ENCODE measurements at regions of chr16 and their contacts with region 1.

Region 1: GRCh38 chr16:27235055-27235937 is 32.0 kb downstream of the KDM8 start:
- DNase-seq: peak; percentile 79 to 94 (median 80)
- ATAC-seq: peak; percentile 88
- H3K4me3 ChIP-seq: no peak overlapping the region
- H3K27ac ChIP-seq: peak overlapping the region; percentile 64
- H3K4me1 ChIP-seq: peaks cover 32 to 48% of the 10 kb centered on the region in 2 experiments
- H3K27me3 ChIP-seq: no peaks in the 10 kb centered on the region
- CTCF ChIP-seq: peak; percentile 81 to 91 (median 88)
- EP300 ChIP-seq: peak; percentile 69
- POLR2A ChIP-seq: peak; percentile 32; the same call in 1 of the 2 replicates
- RAD21 ChIP-seq: peak; percentile 79 to 84

Region 2: GRCh38 chr16:27154705-27155521 is 80.4 kb before region 1 on chr16:
- CTCF ChIA-PET with region 1: no interaction called
- POLR2A ChIA-PET with region 1: no interaction called
- in situ Hi-C with region 1: no loop called
- intact Hi-C with region 1: loop called (anchors 1 kb)
- DNase-seq: peak; percentile 68 to 87 (median 82)
- ATAC-seq: peak; percentile 95
- H3K4me3 ChIP-seq: no peak overlapping the region
- H3K27ac ChIP-seq: no peak overlapping the region
- H3K4me1 ChIP-seq: no peaks in the 10 kb centered on the region
- H3K27me3 ChIP-seq: peaks cover 0 to 15% of the 10 kb centered on the region in 2 experiments; a peak in 2 of 5 replicates
- CTCF ChIP-seq: peak; percentile 86 to 92 (median 87)
- EP300 ChIP-seq: no peak
- POLR2A ChIP-seq: no peak
- RAD21 ChIP-seq: peak; percentile 65 to 84

Region 3: DNA sequence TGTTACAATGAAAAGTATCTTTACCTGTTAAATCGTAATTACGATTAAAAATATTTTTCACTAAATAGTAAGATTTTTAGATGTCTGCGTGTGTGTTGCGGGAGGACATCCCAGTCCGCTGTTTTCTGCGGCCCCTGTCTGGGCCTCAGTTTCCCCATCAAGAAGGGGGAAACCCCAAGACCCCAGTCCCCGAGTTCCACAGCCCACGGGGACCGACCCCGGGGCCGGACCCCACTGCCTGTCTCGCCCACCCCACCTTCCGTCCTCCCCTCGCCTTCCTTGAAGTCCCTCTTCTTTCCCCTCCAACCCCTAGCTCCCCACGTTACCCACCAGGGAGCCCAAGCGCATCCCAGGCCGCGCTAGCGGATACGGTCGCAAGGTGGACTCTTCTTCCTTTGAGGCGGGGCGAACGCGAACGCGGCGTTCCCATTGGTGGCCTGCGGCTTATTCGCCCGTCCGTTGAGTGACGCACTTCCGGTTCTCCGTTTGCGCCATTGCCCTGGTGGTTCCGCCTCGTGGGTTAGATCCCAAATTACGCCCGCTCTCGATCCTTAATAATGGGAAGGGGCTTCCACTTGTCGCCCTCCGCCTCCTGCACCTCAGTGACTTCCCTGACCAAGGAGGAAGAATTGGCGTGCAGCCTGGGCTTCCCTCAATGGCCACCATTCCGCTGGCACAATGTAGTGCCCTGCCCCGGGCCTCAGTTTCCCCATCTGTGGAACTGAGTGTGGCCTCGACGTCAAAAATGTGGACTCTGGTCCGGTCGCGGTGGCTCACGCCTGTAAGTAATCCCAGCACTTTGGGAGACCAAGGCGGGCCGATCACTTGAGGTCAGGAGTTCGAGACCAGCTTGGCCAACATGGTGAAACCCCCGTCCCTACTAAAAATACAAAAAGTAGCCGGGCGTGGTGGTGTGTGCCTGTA is 33.3 kb after region 1 on chr16 and contains the start of gene NSMCE1:
- CTCF ChIA-PET with region 1: no interaction called
- POLR2A ChIA-PET with region 1: interaction called, 4 read pairs
- in situ Hi-C with region 1: no loop called
- intact Hi-C with region 1: loop called (anchors 2 kb)
- DNase-seq: peak; percentile 98 to 99 (median 99)
- ATAC-seq: peak; percentile 100
- H3K4me3 ChIP-seq: peak within 1 kb of the TSS; percentile 72
- H3K27ac ChIP-seq: peak within 1 kb of the TSS; percentile 95
- H3K4me1 ChIP-seq: peaks cover 4 to 7% of the 10 kb centered on the region in 2 experiments; a peak in 3 of 5 replicates
- H3K27me3 ChIP-seq: no peaks in the 10 kb centered on the region
- CTCF ChIP-seq: peak in 2 of 3 experiments; percentile 12 to 18; a peak in 3 of 6 replicates
- EP300 ChIP-seq: no peak
- POLR2A ChIP-seq: peak; percentile 96
- RAD21 ChIP-seq: no peak
- polyA plus RNA-seq, gene NSMCE1: 154 to 163 TPM

Region 4: DNA sequence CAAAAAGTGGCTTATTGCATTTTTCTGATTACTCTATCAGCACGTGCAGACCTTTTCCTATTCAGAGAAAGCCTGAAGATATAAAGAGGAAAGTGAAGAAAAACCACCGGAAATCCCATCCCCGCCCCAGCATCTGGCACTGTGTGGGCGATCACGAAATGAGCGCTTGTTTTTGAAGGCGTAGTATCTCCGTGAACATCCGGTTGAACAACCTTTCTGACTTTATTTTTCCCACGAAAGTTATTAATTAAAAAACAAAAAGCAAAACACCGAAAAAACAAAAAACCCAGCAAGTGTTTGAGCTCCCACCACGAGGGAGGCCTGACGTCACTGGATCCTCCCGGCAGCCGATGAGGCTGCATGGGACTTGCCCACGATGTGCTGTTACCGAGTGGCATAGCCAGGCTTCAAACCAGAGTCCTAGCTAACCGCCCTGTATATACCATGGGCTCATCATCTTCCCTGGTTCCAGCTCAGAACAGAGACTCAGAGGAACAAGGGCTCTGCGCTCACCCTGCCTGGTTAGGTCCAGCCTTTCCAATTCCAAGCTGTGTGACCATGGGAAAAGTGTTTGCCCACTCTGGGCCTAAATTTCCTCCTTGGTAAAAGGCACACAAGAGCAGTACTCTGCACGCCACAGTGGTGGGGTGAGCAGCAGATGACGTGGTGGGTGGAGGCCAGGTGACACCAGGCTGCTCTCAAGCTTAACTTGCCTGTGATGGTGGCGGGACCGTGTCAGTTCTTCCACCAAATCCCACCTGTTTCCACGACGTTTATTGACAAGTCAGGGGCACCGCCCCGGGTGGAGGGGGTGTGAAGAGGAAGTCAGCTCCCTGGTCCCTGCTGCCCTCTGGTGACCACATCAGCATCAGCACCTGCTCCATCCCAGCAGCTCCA is 132.4 kb after region 1 on chr16:
- CTCF ChIA-PET with region 1: interaction called, 19 read pairs
- POLR2A ChIA-PET with region 1: interaction called, 3 read pairs
- in situ Hi-C with region 1: loop called (anchors 5 kb)
- intact Hi-C with region 1: loop called (anchors 1 kb)
- DNase-seq: peak; percentile 83 to 94 (median 92)
- ATAC-seq: peak; percentile 96
- H3K4me3 ChIP-seq: no peak overlapping the region
- H3K27ac ChIP-seq: no peak overlapping the region
- H3K4me1 ChIP-seq: peaks cover 9 to 11% of the 10 kb centered on the region in 2 experiments
- H3K27me3 ChIP-seq: peaks cover 0 to 9% of the 10 kb centered on the region in 2 experiments; a peak in 2 of 5 replicates
- CTCF ChIP-seq: peak; percentile 82 to 91 (median 86)
- EP300 ChIP-seq: no peak
- POLR2A ChIP-seq: no peak
- RAD21 ChIP-seq: peak; percentile 81 to 95

Region 5: GRCh38 chr16:27374804-27375425 is 139.6 kb after region 1 on chr16:
- CTCF ChIA-PET with region 1: interaction called, 3 read pairs
- POLR2A ChIA-PET with region 1: interaction called, 3 read pairs
- in situ Hi-C with region 1: loop called (anchors 5 kb)
- intact Hi-C with region 1: no loop called
- DNase-seq: peak; percentile 70 to 89 (median 84)
- ATAC-seq: peak; percentile 98
- H3K4me3 ChIP-seq: no peak overlapping the region
- H3K27ac ChIP-seq: no peak overlapping the region
- H3K4me1 ChIP-seq: no peaks in the 10 kb centered on the region
- H3K27me3 ChIP-seq: peaks cover 4 to 30% of the 10 kb centered on the region in 2 experiments; a peak in 4 of 5 replicates
- CTCF ChIP-seq: peak; percentile 63 to 73 (median 69)
- EP300 ChIP-seq: no peak
- POLR2A ChIP-seq: no peak
- RAD21 ChIP-seq: peak; percentile 15 to 71; a peak in 2 of 4 replicates

Region 6: GRCh38 chr16:27426423-27427408 is 191.4 kb after region 1 on chr16:
- CTCF ChIA-PET with region 1: no interaction called
- POLR2A ChIA-PET with region 1: no interaction called
- in situ Hi-C with region 1: no loop called
- intact Hi-C with region 1: no loop called
- DNase-seq: peak; percentile 29 to 78 (median 42)
- ATAC-seq: peak; percentile 92
- H3K4me3 ChIP-seq: peak overlapping the region; percentile 2; the same call in 1 of the 2 replicates
- H3K27ac ChIP-seq: no peak overlapping the region
- H3K4me1 ChIP-seq: peaks cover 0 to 5% of the 10 kb centered on the region in 2 experiments; a peak in 4 of 5 replicates
- H3K27me3 ChIP-seq: no peaks in the 10 kb centered on the region; a peak in 1 of 5 replicates
- CTCF ChIP-seq: no peak
- EP300 ChIP-seq: no peak; the same call in 1 of the 2 replicates
- POLR2A ChIP-seq: no peak
- RAD21 ChIP-seq: no peak

Region 7: GRCh38 chr16:27455700-27456099 is 220.4 kb after region 1 on chr16:
- CTCF ChIA-PET with region 1: interaction called, 4 read pairs
- POLR2A ChIA-PET with region 1: no interaction called
- in situ Hi-C with region 1: no loop called
- intact Hi-C with region 1: loop called (anchors 2 kb)
- DNase-seq: peak in 1 of 4 experiments; percentile 13
- ATAC-seq: no peak
- H3K4me3 ChIP-seq: no peak overlapping the region
- H3K27ac ChIP-seq: no peak overlapping the region
- H3K4me1 ChIP-seq: peaks cover 0 to 2% of the 10 kb centered on the region in 2 experiments; a peak in 2 of 5 replicates
- H3K27me3 ChIP-seq: peaks cover 11 to 30% of the 10 kb centered on the region in 2 experiments; a peak in 4 of 5 replicates
- CTCF ChIP-seq: no peak
- EP300 ChIP-seq: no peak
- POLR2A ChIP-seq: no peak
- RAD21 ChIP-seq: no peak

Measured in K562 (cell line).